GM12878 (cell line): ENCODE measurements at regions of chr9 and their contacts with region 1.

Region 1: DNA sequence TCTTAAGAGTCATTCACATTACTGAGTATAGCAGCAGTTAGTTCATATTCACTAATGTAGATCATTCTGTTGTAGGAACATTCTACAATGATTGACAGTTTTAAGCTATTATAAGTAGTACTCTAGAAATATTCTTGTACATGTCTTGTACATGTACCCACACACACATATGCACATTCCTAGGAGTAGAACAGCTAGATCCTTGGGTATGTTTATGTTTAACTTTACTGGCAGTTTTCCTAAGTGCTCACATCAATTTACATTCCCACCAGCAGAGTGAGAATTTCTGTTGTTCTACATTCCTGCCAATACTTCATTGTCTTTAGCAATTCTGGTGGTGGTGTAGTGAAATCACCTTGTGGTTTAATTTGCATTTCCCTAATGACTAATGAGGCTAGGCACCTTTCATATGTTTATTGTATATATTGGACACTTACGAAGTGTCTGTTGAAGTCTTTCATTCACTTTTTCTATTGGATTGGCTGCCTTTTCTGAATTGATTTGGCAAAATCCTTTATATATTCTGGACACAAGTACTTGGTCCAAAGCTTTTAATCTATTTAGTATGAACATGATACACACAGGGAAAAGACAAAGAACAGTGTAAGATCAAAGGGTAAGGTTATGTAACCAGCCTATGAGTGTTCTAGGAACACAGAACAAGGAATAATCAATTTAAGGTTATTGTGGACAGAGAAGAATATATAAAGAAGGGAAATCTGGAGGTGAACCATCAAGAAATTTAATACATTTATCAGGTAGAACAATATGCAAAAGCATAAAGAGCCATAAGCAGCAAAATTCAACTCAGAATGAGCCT is 95.6 kb downstream of the MLLT3 start:
- DNase-seq: peak; percentile 28
- ATAC-seq: peak; percentile 89
- H3K4me3 ChIP-seq: no peak overlapping the region
- H3K27ac ChIP-seq: no peak overlapping the region
- H3K4me1 ChIP-seq: peaks cover 30% of the 10 kb centered on the region; the same call in 1 of the 2 replicates
- H3K27me3 ChIP-seq: no peaks in the 10 kb centered on the region
- CTCF ChIP-seq: no peak; a peak in 1 of 6 replicates
- EP300 ChIP-seq: no peak
- POLR2A ChIP-seq: no peak
- RAD21 ChIP-seq: no peak

Region 2: GRCh38 chr9:20512106-20512505 is 14.6 kb before region 1 on chr9:
- CTCF ChIA-PET with region 1: interaction called, 12 read pairs
- POLR2A ChIA-PET with region 1: interaction called, 4 read pairs
- RAD21 ChIA-PET with region 1: interaction called, 3 read pairs
- SMC1A ChIA-PET with region 1: interaction called, 4 read pairs
- in situ Hi-C with region 1: no loop called
- intact Hi-C with region 1: no loop called
- DNase-seq: no peak
- ATAC-seq: no peak
- H3K4me3 ChIP-seq: no peak overlapping the region
- H3K27ac ChIP-seq: no peak overlapping the region
- H3K4me1 ChIP-seq: peaks cover 15% of the 10 kb centered on the region
- H3K27me3 ChIP-seq: no peaks in the 10 kb centered on the region
- CTCF ChIP-seq: no peak
- EP300 ChIP-seq: no peak
- POLR2A ChIP-seq: no peak
- RAD21 ChIP-seq: no peak

Region 3: GRCh38 chr9:20537269-20537668 is 10.6 kb after region 1 on chr9:
- CTCF ChIA-PET with region 1: interaction called, 18 read pairs
- POLR2A ChIA-PET with region 1: interaction called, 6 read pairs
- RAD21 ChIA-PET with region 1: interaction called, 6 read pairs
- SMC1A ChIA-PET with region 1: interaction called, 9 read pairs
- in situ Hi-C with region 1: no loop called
- intact Hi-C with region 1: no loop called
- DNase-seq: no peak
- ATAC-seq: no peak
- H3K4me3 ChIP-seq: no peak overlapping the region
- H3K27ac ChIP-seq: no peak overlapping the region
- H3K4me1 ChIP-seq: no peaks in the 10 kb centered on the region
- H3K27me3 ChIP-seq: no peaks in the 10 kb centered on the region
- CTCF ChIP-seq: no peak
- EP300 ChIP-seq: no peak
- POLR2A ChIP-seq: no peak
- RAD21 ChIP-seq: no peak

Region 4: GRCh38 chr9:20835364-20836286 is 308.9 kb after region 1 on chr9:
- CTCF ChIA-PET with region 1: no interaction called
- POLR2A ChIA-PET with region 1: no interaction called
- RAD21 ChIA-PET with region 1: no interaction called
- SMC1A ChIA-PET with region 1: no interaction called
- in situ Hi-C with region 1: no loop called
- intact Hi-C with region 1: no loop called
- DNase-seq: no peak
- ATAC-seq: peak; percentile 52; the same call in 2 of the 3 replicates
- H3K4me3 ChIP-seq: no peak overlapping the region
- H3K27ac ChIP-seq: no peak overlapping the region
- H3K4me1 ChIP-seq: no peaks in the 10 kb centered on the region
- H3K27me3 ChIP-seq: no peaks in the 10 kb centered on the region
- CTCF ChIP-seq: no peak
- EP300 ChIP-seq: no peak
- POLR2A ChIP-seq: no peak
- RAD21 ChIP-seq: no peak